Heart left ventricle (tissue), 16 donors: ENCODE measurements at regions of chr6 and their contacts with region 1.

Region 1: GRCh38 chr6:133241086-133241900 is at the start of gene EYA4:
- DNase-seq: peak; percentile 23 to 73 (median 50)
- ATAC-seq: peak; percentile 56 to 75 (median 70)
- H3K4me3 ChIP-seq: peak within 1 kb of the TSS; percentile 38 to 73 (median 62)
- H3K27ac ChIP-seq: peak within 1 kb of the TSS; percentile 80 to 93 (median 82)
- H3K4me1 ChIP-seq: peaks cover 0 to 22% (median 0%) of the 10 kb centered on the region in 12 donors
- H3K27me3 ChIP-seq: peaks cover 0 to 66% (median 15%) of the 10 kb centered on the region in 9 donors
- CTCF ChIP-seq: no peak
- POLR2A ChIP-seq: no peak
- total RNA-seq, gene EYA4: 14.6 to 29.6 (median 22.6) TPM

Region 2: DNA sequence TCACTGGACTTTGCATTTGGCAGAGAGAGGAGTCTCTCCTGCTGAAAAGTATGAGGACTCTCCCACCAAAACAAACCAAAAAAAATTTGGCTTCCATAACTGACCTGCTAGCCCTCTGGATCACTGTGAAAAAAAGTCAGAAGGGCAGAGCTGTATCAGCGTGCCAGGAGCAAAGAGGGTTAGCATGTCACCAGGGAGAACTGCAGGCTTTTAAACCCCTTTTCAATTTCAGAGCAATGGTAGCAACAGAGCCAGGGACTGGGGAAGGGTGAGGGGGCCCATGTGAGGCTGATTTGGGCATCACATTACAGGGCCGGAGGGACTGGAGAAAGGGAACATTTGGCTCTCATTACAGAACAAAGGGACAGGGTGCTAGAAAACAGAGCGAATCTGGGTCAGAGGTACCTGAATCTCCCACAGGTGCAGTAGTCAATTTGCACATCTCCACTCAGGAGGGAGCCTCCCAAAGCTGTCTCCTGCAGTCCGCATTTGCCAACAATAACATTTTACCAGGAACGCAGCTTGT is 185.8 kb before region 1 on chr6:
- intact Hi-C with region 1: loop called in 1 of 10 experiments (anchors 10 kb)
- DNase-seq: no peak
- ATAC-seq: peak; percentile 48 to 59 (median 54)
- H3K4me3 ChIP-seq: no peak overlapping the region
- H3K27ac ChIP-seq: peak overlapping the region in 8 of 12 donors; percentile 26 to 66 (median 52)
- H3K4me1 ChIP-seq: peaks cover 0 to 16% (median 0%) of the 10 kb centered on the region in 12 donors
- H3K27me3 ChIP-seq: no peaks in the 10 kb centered on the region
- CTCF ChIP-seq: no peak
- POLR2A ChIP-seq: no peak

Region 3: DNA sequence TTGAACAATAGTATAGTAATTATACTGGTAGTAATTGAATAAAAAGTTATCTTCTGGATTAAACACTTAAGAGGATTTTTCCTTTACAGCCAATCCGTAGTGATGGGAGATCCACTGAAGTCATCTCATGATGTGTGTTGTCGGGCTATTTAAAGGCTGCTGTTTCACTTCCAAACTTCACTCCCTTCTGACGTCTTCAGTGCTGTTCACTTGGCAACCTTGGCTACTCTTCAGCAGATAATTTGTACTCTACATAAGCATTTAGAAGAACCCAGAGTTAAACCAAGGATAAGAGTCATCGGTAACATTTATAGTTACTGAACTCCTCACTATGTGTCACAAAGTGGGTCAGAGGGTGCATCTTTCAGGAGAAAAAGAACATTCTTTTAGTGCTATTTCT is 179.2 kb before region 1 on chr6:
- intact Hi-C with region 1: loop called in 2 of 10 experiments (anchors 2 to 10 kb)
- DNase-seq: peak in 4 of 5 donors; percentile 30 to 48 (median 43)
- ATAC-seq: peak; percentile 93 to 98 (median 97)
- H3K4me3 ChIP-seq: no peak overlapping the region
- H3K27ac ChIP-seq: peak overlapping the region in 11 of 12 donors; percentile 34 to 81 (median 72)
- H3K4me1 ChIP-seq: peaks cover 0 to 17% (median 2%) of the 10 kb centered on the region in 12 donors
- H3K27me3 ChIP-seq: no peaks in the 10 kb centered on the region
- CTCF ChIP-seq: no peak
- POLR2A ChIP-seq: no peak

Region 4: GRCh38 chr6:133198725-133199124 is 42.6 kb before region 1 on chr6:
- intact Hi-C with region 1: no loop called
- DNase-seq: no peak
- ATAC-seq: no peak
- H3K4me3 ChIP-seq: no peak overlapping the region
- H3K27ac ChIP-seq: no peak overlapping the region
- H3K4me1 ChIP-seq: no peaks in the 10 kb centered on the region
- H3K27me3 ChIP-seq: no peaks in the 10 kb centered on the region
- CTCF ChIP-seq: no peak
- POLR2A ChIP-seq: no peak

Region 5: DNA sequence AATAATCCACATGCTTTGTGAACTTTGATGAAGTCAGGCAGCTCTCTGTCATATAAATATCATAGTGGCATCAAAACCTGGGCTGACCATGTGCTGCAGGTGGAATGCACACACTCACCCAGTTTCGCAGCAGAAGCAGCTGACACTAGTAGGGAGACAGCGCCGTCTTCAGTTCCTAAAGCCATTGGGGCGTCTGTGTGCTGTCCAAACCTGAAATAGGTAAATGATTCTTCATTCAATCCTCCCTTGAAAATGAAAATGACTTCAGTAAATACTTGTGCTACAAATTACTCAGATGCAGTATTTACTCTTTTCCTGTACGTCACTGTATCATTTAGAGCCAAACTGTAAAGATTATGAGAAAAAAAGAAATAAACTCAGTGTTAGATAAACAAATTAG is 127.4 kb after region 1 on chr6:
- intact Hi-C with region 1: loop called in 3 of 10 experiments (anchors 5 to 10 kb)
- DNase-seq: peak in 2 of 5 donors; percentile 25 to 27
- ATAC-seq: peak in 3 of 4 donors; percentile 36 to 66 (median 59)
- H3K4me3 ChIP-seq: no peak overlapping the region
- H3K27ac ChIP-seq: no peak overlapping the region
- H3K4me1 ChIP-seq: peaks cover 0 to 11% (median 0%) of the 10 kb centered on the region in 12 donors
- H3K27me3 ChIP-seq: no peaks in the 10 kb centered on the region
- CTCF ChIP-seq: peak in 5 of 12 donors; percentile 8 to 19 (median 13)
- POLR2A ChIP-seq: no peak